Activated CD8-positive, alpha-beta T cell treated with anti-CD3 and anti-CD28 coated beads for 36 hours (primary cell): ENCODE measurements at regions of chr19 and their contacts with region 1.

Region 1: DNA sequence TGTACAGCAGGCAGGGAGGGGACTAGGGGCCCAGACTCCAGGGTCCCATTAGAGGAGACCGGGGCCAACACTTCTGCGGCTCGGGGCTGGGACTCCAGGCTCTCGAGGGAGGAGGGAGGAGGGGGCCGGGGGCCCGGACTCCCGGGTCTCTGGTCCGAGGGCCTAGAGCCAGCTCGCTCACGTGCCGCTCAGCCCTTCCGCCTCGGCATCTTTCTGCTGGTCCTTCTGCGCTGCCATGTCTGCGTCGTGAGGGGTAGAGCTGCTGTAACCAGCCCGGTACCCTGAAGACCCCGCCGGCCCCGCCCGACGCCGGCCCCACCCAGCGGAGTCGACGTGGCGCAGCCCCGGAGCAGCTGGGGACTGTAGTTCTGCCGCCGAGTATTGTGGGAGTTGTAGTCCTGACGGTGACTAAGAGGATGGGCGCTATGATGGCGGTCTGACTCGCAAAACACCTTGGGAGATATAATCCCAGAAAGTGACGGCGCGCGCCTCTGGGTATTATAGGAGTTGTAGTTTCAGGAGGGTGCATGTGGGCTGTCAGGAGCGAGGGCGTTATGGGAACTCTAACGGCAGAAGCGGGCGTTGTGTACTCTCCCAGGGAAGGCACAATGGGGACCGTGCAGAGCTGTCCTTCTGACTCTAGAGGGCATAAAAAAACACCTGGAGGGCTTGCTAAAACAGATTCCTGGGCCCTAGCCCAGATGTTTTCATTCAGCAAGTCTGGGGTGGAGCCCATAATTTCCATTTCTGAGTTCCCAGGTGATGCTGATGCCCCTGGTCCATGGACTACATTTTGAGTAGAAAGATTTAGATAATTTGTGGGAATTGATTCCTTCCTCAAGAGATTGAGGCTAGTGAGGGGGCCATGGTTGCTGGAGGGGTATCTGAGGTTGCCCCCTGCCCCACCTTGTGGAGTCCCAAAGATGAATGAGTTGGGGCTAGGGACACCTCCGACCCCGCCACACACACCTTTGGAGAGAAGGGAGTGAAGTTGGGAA is at the start of gene RABAC1:
- DNase-seq: peak; percentile 94
- ATAC-seq: peak; percentile 89
- H3K4me3 Mint-ChIP-seq: peak within 1 kb of the TSS; percentile 82
- H3K27ac Mint-ChIP-seq: peak within 1 kb of the TSS; percentile 84
- H3K4me1 Mint-ChIP-seq: peaks cover 16% of the 10 kb centered on the region
- H3K27me3 Mint-ChIP-seq: no peaks in the 10 kb centered on the region
- CTCF ChIP-seq: peak; percentile 55
- total RNA-seq, gene RABAC1: 49.6 to 52.4 TPM

Region 2: DNA sequence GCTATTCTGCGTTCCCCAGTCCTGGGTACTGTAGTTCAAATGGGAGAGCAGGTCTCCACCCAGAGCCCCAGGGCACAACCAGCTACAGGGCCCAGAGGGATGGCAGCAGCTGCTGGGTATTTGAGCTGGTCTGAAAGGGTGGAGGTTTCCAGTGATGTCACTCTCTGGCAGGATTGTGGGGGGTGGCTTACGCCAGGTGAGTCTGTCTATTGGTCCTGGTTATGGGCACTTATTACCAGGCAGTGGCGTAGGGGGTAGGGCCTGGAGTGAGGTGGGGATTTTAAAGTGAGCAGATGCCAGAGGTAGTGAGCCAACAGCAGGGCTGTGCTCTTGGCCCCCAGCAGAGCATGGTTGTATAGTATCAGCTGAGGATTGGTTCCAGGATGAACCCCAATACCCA is 93.1 kb before region 1 on chr19:
- CTCF ChIA-PET with region 1: interaction called, 4 read pairs
- POLR2A ChIA-PET with region 1: interaction called, 37 read pairs
- intact Hi-C with region 1: no loop called
- DNase-seq: no peak
- ATAC-seq: peak; percentile 32
- H3K4me3 Mint-ChIP-seq: peak overlapping the region; percentile 23
- H3K27ac Mint-ChIP-seq: peak overlapping the region; percentile 79
- H3K4me1 Mint-ChIP-seq: peaks cover 85% of the 10 kb centered on the region
- H3K27me3 Mint-ChIP-seq: no peaks in the 10 kb centered on the region
- CTCF ChIP-seq: no peak

Region 3: GRCh38 chr19:41978470-41978869 is 19.1 kb after region 1 on chr19:
- CTCF ChIA-PET with region 1: no interaction called
- POLR2A ChIA-PET with region 1: no interaction called
- intact Hi-C with region 1: no loop called
- DNase-seq: no peak
- ATAC-seq: no peak
- H3K4me3 Mint-ChIP-seq: no peak overlapping the region
- H3K27ac Mint-ChIP-seq: no peak overlapping the region
- H3K4me1 Mint-ChIP-seq: no peaks in the 10 kb centered on the region
- H3K27me3 Mint-ChIP-seq: no peaks in the 10 kb centered on the region
- CTCF ChIP-seq: no peak